Activated CD4-positive, alpha-beta memory T cell treated with anti-CD3 and anti-CD28 coated beads, Interleukin-2, amount 10 ng/mL, durations not matched to agents 7 days and 5 days (primary cell): ENCODE measurements at regions of chr19 and their contacts with region 1.

Region 1: GRCh38 chr19:39335168-39335548 is 685 bp downstream of the GMFG start:
- DNase-seq: peak; percentile 44
- H3K4me3 Mint-ChIP-seq: peak overlapping the region; percentile 98
- H3K27ac Mint-ChIP-seq: peak overlapping the region; percentile 97
- H3K4me1 Mint-ChIP-seq: peaks cover 62% of the 10 kb centered on the region
- H3K27me3 Mint-ChIP-seq: no peaks in the 10 kb centered on the region

Region 2: DNA sequence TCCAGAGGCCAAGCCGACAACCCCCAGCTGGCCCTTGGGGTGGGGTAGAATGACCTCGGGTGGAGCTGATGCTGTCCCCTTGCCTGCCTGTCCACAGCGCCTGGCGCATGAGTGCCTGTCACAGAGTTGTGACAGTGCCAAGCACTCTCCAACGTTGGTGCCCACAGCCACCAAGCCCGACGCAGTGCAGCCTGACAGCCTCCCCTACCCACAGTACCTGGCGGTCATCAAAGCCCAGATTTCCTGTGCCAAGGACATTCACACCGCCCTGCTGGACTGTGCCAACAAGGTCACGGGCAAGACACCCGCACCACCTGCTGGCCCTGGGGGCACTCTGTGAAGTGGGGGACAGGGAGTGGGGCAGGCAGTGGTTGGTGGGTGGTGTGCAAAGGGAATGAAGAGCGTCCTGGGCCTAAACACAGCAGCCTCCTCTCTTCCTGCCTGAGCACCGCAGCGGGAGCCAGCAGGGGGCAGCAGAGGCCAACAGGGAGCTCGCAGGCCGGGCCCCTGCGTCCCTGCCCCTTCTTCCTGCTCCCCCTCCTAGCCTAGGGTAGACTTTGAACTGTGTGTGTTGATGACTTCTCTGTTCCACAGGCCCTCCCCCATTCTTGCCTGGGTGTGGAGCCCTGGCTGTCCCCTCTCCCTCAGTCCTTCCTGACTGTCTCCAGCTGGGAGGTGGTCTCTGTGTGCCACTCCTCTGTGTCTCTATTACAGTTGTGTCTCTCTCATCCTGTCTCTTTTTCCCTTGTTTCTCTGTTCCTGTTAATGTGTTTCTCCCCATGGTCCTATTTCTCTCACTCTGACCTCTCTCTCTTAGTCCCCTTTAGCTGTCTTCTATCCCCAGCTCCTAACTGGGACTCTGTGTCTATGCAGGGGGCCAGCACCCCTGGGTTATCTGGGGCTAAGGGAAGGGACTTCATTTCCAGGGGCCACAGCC is 62.5 kb after region 1 on chr19:
- CTCF ChIA-PET with region 1: interaction called, 6 read pairs
- POLR2A ChIA-PET with region 1: interaction called, 25 read pairs
- DNase-seq: peak; percentile 95
- H3K4me3 Mint-ChIP-seq: peak overlapping the region; percentile 68
- H3K27ac Mint-ChIP-seq: peak overlapping the region; percentile 96
- H3K4me1 Mint-ChIP-seq: peaks cover 76% of the 10 kb centered on the region
- H3K27me3 Mint-ChIP-seq: no peaks in the 10 kb centered on the region

Region 3: DNA sequence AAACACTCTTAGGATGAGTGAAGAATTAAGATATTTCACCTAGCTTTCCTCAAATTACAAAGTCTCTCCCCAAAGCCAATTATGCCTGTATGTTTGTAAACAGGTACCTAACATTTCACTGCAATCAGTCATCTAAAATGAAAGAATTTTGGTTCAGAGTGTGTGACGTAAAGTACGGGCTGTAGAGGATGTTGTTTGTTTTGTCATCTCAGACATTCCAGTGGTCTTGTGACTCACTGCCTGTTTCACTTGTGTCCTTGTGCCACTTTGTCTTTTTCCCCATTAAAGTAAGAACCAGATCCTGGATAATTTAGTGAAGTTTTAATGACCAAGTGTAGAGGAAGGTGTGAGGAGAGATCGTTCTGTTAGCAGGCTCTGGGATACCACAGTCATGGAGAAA is 233.4 kb after region 1 on chr19:
- CTCF ChIA-PET with region 1: no interaction called
- POLR2A ChIA-PET with region 1: no interaction called
- DNase-seq: no peak
- H3K4me3 Mint-ChIP-seq: no peak overlapping the region
- H3K27ac Mint-ChIP-seq: no peak overlapping the region
- H3K4me1 Mint-ChIP-seq: peaks cover 6% of the 10 kb centered on the region
- H3K27me3 Mint-ChIP-seq: peaks cover 22% of the 10 kb centered on the region